ENCODE measurements at regions of chr1 and their contacts with region 1.

Region 1: DNA sequence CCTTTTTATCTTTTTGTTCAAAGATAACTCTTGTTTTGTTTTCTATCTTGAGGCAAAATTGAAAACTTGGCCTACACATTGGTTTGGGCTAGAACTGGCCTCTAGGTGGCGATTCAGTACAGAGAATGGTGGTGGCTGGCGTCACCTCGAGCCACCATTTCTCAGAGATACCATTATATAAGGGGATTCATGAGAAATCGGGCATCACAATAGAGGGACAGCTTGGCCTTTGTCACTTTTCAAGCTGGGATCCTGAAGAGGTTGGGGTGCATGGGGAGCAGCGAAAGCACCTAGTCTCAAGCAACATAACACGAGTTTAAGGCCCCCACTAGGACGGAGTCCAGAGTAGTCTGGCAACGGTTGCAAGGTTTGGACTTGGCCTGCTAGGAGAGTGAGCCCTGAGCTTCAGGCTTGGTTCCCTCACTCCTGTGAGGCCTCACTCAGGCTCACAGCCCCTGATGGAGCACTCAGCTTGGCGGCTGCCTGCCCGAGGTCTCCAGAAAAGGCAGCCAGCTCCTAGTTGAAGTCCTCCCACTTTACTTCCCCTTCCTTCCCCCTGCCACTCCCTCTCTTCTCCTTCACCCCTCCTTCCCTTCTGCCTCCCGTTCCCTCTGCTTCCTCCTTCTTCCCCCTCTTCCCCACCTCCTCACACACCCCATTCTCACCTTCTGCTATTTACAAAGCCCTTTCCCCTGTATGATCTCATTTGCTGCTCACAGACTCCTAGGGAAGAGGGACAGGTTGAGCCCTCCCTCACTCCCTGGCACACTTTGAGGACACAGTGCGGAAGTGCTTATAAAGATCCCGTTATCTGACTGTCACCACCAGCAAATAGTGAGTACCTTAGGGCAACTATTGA is 67.8 kb downstream of the LRIG2 start:
- DNase-seq: peak; percentile 72
- ATAC-seq: peak; percentile 80
- H3K4me3 Mint-ChIP-seq: no peak overlapping the region
- H3K27ac Mint-ChIP-seq: no peak overlapping the region
- H3K4me1 Mint-ChIP-seq: peaks cover 18% of the 10 kb centered on the region
- H3K27me3 Mint-ChIP-seq: no peaks in the 10 kb centered on the region

Region 2: DNA sequence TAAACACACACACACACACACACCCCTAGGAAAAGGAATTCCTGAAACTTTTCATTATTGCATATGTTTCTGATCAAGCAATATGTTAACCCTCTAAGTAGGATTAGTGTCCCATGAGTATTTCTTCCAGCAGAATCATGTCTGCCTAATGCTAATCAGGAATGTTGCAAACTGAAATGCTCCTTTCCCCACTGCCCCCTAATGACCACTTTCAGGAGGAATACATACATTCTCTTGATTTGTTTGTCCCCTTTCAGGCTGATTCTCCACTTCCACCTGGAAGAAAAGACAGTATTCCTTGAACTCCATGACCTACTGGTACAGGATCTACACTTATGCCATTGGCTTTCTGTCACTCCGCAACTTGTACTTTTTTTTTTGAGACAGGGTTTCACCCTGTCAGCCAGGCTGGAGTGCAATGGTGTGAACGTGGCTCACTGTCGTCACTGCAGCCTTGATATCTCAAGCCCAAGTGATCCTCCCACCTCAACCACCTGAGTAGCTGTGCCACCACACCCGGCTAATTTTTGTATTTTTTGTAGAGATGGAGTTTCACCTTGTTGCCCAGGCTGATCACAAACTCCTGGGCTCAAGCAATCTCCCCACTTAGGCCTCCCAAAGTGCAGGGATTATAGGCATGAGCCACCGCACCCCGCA is 11.2 kb before region 1 on chr1:
- CTCF ChIA-PET with region 1: interaction called, 10 read pairs
- POLR2A ChIA-PET with region 1: no interaction called
- DNase-seq: no peak
- ATAC-seq: no peak
- H3K4me3 Mint-ChIP-seq: no peak overlapping the region
- H3K27ac Mint-ChIP-seq: no peak overlapping the region
- H3K4me1 Mint-ChIP-seq: peaks cover 4% of the 10 kb centered on the region
- H3K27me3 Mint-ChIP-seq: no peaks in the 10 kb centered on the region

Region 3: DNA sequence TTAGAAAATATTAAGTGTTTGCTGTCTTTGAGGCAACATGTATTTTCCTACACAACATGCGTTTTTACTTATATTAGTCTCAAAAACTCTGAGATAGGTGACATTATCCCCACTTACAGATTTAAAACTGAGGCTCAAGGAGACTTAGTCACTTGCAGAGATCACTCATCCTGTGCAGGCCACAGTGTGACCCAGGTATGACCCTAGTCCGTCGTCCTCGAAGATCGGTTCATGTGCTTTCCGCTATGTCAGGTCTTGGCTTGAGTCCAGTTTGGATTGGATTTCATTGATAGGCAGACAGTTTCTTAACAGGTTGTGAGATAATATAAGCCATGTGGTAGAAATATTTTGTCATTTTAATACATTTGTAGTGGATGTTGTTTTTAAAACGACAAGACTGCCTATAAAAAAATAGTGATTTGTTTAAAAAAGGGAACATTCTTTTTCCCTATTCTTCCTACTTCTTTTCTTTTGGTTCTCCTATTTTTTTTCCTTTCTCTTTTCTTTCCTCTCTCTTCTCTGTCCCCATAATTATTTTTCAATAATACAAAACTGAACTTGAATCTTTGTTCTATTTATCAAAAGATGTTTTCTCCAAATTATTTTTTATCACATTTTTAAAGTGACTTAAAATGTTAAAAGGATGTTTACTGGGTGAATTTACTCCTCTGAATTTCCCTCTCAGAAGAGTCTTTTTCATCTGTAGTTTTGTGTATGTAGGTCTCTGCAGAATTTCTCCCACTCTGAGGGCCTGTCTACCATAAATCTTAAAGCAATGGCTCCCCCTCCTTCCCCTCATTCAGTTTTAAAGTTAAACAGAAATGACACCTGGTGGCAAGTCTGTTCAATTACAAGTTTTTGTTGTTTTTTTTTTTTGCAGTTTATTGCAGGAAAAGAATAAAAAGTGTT is 536.7 kb after region 1 on chr1:
- CTCF ChIA-PET with region 1: interaction called, 36 read pairs
- POLR2A ChIA-PET with region 1: no interaction called
- DNase-seq: no peak
- ATAC-seq: no peak
- H3K4me3 Mint-ChIP-seq: no peak overlapping the region
- H3K27ac Mint-ChIP-seq: no peak overlapping the region
- H3K4me1 Mint-ChIP-seq: no peaks in the 10 kb centered on the region
- H3K27me3 Mint-ChIP-seq: peaks cover 2% of the 10 kb centered on the region